ENCODE measurements at regions of chr11 and their contacts with region 1.

Region 1: DNA sequence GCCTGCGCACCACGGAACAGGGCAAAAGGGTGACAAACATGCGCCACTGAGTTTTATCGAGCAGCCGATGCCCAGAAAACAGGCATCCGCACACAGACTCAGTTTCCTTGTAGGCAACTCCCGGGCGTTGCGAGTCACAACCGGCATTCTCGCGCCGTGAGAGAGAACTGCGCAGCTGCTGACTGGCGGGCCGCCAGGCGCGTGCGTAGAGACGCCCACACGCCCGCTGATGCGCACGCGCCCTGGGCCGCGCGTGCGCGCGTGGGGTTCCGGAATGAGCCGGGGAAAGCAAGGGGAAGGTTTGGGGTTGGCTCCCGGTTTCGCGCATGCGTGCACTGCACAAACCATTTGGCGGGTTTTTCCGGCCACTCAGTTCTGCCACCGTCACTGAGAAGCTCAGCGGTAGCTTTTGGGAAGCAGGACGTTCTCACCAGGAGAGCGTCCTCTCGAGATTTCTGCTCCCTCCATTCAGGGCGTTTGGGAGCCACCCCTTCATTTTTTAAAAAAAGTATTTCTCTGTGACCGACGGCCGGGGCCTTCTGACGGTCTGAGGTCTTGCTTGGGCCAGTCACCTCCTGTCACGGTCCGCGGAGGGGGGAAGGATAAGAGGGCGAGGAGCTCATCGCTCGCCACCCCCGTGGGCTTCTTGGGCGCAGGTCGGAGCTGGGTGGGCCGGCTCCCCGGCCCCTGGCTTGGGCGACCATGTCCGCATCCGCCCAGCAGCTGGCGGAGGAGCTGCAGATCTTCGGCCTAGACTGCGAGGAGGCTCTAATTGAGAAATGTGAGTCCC is at the start of gene POLA2:
- DNase-seq: peak; percentile 98
- H3K4me3 ChIP-seq: peak within 1 kb of the TSS; percentile 36 to 73 (median 60)
- H3K27ac ChIP-seq: peak within 1 kb of the TSS; percentile 86 to 91 (median 90)
- H3K4me1 ChIP-seq: peaks cover 0 to 18% (median 13%) of the 10 kb centered on the region in 4 donors
- H3K27me3 ChIP-seq: no peaks in the 10 kb centered on the region
- CTCF ChIP-seq: no peak
- EP300 ChIP-seq: no peak
- POLR2A ChIP-seq: peak; percentile 80 to 85
- total RNA-seq, gene POLA2: 3.6 to 8.8 (median 4.8) TPM

Region 2: DNA sequence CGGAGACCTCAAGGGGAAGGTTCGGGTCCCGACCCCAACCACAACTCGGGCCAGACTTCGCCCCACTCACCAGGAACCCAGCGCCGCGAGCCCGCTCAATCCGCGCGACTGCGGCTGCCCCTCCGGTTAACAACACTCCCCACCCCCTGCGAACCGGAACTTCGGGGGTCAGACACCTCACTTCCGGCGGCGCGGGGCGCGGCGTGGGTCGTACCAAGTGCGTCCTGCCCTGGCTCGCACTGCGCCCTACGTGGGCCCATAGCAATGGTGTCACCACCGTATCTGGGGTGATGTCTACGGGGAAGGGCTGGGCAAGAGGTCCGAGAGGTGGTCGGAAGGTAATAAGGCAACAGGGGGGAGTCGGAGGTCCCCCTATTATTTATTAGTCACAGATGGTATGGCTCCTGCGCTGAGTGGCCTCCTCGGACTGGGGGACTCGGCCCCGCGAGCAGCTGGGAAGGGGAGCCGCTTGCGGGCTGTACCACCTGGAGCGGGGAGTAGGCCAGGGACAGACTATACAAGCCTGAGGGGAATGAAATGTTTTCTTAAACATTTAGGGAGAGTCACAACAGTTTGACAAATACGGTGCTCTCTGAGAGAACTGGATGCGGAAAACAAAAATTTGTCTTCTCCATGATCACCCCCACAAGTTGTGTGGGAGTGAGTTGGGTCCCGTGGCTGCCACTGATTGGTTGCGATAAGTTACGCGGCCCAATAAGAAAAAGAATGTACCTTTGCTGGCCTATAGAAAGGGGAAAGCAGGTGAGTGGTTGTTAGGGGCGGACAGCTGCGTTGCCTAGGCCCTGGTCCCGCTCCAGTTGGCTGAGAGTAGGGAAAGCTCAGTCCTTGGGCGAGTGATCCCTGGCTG is 127.2 kb before region 1 on chr11 and contains the start of gene SYVN1:
- intact Hi-C with region 1: loop called (anchors 5 kb)
- DNase-seq: peak; percentile 98
- H3K4me3 ChIP-seq: peak within 1 kb of the TSS; percentile 83 to 93 (median 90)
- H3K27ac ChIP-seq: peak within 1 kb of the TSS; percentile 94 to 98 (median 96)
- H3K4me1 ChIP-seq: peaks cover 0 to 31% (median 25%) of the 10 kb centered on the region in 4 donors
- H3K27me3 ChIP-seq: no peaks in the 10 kb centered on the region
- CTCF ChIP-seq: no peak
- EP300 ChIP-seq: peak in 1 of 4 donors; percentile 40
- POLR2A ChIP-seq: peak; percentile 97 to 98
- total RNA-seq, gene SYVN1: 17.1 to 36.0 (median 24.3) TPM

Region 3: DNA sequence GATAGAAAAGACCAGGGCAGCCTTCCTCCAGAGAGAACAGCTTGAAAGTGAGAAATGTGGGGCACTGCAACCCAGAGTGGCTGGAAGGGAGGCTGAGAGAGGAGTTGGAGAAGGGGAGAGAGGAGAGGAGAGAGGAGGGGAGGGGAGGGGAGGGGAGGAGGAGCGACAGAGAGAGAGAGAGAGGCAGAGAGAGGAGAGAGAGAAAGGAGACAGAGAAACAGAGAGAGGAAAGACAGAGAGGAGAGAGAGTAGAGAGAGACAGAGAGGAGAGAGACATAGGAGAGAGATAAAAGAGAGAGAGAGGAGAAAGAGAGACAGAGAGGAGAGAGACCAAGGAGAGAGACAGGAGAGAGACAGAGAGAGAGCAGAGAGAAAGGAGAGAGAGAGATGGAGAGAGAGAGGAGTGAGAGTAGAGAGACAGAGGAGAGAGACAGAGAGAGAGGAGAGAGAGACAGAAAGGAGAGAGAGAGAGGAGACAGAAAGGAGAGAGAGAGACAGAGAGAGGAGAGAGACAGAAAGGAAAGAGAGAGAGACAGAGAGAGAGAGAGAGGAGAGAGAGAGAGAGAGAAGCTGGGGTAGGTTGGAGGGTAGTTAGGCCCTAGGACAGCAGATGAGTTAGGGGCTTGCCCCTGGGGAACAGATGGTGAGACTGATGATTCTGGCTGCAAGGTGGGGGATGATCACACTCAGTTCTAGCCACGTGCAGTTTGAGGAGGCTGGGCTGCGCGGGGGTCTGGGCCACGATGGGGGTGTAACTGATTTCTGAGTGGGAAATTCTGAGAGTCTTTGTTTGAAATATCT is 254.5 kb after region 1 on chr11:
- intact Hi-C with region 1: loop called (anchors 10 kb)
- DNase-seq: peak; percentile 57
- H3K4me3 ChIP-seq: no peak overlapping the region
- H3K27ac ChIP-seq: peak overlapping the region in 1 of 4 donors; percentile 14
- H3K4me1 ChIP-seq: no peaks in the 10 kb centered on the region
- H3K27me3 ChIP-seq: no peaks in the 10 kb centered on the region
- CTCF ChIP-seq: no peak
- EP300 ChIP-seq: no peak
- POLR2A ChIP-seq: no peak

Region 4: GRCh38 chr11:65779851-65780577 is 518.2 kb after region 1 on chr11:
- intact Hi-C with region 1: no loop called
- DNase-seq: peak; percentile 88
- H3K4me3 ChIP-seq: peak overlapping the region; percentile 69 to 99 (median 79)
- H3K27ac ChIP-seq: peak overlapping the region; percentile 73 to 85 (median 78)
- H3K4me1 ChIP-seq: peaks cover 0 to 29% (median 21%) of the 10 kb centered on the region in 4 donors
- H3K27me3 ChIP-seq: peaks cover 0 to 7% (median 0%) of the 10 kb centered on the region in 3 donors
- CTCF ChIP-seq: peak; percentile 92 to 97 (median 96)
- EP300 ChIP-seq: no peak
- POLR2A ChIP-seq: peak in 1 of 2 donors; percentile 16